ENCODE measurements at regions of chr17 and their contacts with region 1.

Region 1: DNA sequence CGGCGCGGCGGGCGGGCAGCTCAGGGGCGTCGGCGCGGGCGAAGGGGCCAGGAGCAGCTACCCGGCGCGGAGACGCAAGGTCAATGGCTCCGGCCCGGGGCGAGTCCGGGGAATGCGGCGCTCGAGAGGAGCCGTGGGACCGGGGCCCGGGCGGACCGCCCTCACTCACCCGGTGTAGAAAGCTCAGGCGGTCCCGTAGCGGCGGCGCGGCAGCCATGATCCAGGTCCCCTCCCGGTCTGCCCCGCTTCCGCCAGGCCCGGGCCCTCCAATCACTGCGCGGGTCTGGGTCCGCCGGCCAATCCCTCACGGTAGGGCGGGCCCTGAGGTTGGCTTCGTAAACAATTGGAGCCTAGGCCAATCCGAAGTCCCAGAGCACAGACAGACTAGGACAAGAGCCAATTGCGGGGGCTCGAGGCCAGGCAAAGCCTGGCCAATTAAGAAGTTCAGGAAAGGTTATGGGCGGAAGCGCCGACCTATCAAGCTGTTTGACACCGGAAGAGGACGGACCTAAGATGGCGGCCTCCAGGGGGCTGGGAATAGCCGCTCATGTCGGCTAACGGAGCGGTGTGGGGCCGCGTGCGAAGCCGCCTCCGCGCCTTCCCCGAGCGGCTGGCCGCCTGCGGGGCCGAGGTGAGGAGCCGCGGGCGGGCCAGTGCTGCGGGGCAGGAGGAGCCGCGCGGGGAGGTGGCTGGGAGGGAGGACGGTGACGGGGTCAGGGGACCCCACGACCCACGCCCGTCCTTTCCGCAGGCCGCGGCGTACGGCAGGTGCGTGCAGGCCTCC is at the starts of genes NDUFAF8 and TEPSIN:
- DNase-seq: peak; percentile 100
- H3K4me3 ChIP-seq: peak within 1 kb of the TSS; percentile 79
- H3K27ac ChIP-seq: peak within 1 kb of the TSS; percentile 61
- H3K4me1 ChIP-seq: peaks cover 35% of the 10 kb centered on the region
- CTCF ChIP-seq: no peak
- total RNA-seq, gene NDUFAF8: 129 and 161 TPM in 2 replicates
- total RNA-seq, gene TEPSIN: 29.7 and 46.4 TPM in 2 replicates

Region 2: DNA sequence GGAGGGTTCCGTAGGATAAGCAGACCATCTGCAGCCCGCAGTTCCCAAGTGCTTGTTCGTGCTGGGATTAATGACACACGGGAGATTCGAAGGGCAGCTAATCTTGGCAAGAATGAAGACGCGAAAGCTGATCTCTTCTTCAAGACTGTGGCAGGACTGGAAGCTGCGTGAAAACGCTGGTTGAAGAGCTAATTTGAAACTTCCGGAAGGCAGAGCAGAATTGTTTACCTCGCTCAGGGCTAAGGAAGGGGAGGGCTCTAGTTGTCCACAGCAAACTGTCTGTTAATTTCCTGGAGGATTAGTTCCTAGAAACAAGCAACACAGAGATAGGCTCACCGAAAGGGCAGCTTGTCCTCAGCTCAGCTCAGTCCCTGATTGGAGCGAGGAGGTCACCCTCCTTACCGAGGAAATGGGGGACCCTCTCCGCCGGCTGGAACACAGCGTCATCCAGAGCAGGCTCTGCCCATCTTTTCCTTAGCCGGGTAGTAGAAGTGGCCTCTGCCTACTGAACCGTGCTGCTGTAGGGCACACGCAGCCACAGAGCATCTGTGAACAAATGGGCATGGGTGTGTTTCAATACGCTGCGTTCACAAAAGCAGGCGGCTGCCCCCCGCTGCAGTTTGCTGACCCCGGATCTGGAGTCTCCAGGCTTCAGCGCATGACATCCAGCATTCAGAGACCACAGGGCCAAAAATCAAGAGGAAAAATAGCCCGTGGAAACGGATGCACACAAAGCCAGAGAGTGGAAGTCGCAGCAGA is 220.8 kb before region 1 on chr17:
- CTCF ChIA-PET with region 1: no interaction called
- POLR2A ChIA-PET with region 1: no interaction called
- intact Hi-C with region 1: loop called (anchors 2 kb)
- DNase-seq: no peak
- H3K4me3 ChIP-seq: no peak overlapping the region
- H3K27ac ChIP-seq: no peak overlapping the region
- H3K4me1 ChIP-seq: no peaks in the 10 kb centered on the region
- CTCF ChIP-seq: no peak

Region 3: GRCh38 chr17:81040791-81041337 is 198.1 kb before region 1 on chr17:
- CTCF ChIA-PET with region 1: no interaction called
- POLR2A ChIA-PET with region 1: no interaction called
- intact Hi-C with region 1: no loop called
- DNase-seq: peak; percentile 52
- H3K4me3 ChIP-seq: no peak overlapping the region
- H3K27ac ChIP-seq: no peak overlapping the region
- H3K4me1 ChIP-seq: no peaks in the 10 kb centered on the region
- CTCF ChIP-seq: peak; percentile 81

Region 4: DNA sequence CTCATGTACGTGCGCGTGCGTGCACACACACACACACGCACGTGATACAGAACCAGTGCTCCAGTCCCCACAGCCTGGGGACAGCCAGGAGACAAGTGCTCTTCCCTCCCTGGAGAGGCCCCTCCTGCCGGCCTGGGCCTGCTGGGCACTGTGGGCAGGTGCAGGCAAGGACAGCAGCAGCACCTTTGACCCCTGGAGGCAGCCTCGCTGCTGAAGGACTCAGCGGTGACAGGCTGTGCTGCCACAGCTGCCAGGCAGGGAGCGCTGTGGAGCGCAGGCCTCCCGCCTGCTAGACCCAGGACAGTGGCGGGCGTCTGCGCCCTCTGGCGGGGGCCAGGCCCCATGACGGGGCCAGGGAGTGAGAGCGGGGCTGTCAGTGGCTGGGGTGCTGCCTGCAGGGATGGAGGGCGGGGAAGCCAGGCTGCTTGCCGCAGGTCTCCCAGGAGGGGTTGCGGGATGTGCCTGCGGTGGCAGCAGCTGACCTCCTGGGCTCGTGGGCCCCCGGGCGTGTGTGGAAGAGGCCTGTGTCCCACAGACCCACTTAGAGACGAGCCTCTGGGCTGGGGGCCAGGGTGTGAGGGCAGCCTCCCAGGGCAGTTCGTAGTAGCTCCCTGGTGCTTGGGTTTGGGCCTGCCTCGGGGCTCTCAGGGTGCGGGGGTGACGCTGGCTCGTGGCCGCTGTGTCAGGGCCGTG is 137.2 kb before region 1 on chr17:
- CTCF ChIA-PET with region 1: no interaction called
- POLR2A ChIA-PET with region 1: no interaction called
- intact Hi-C with region 1: loop called (anchors 1 kb)
- DNase-seq: peak; percentile 93
- H3K4me3 ChIP-seq: no peak overlapping the region
- H3K27ac ChIP-seq: no peak overlapping the region
- H3K4me1 ChIP-seq: peaks cover 4% of the 10 kb centered on the region
- CTCF ChIP-seq: peak; percentile 100

Region 5: GRCh38 chr17:81142301-81143199 is 96.5 kb before region 1 on chr17:
- CTCF ChIA-PET with region 1: interaction called, 7 read pairs
- POLR2A ChIA-PET with region 1: no interaction called
- intact Hi-C with region 1: loop called (anchors 1 kb)
- DNase-seq: peak; percentile 81
- H3K4me3 ChIP-seq: no peak overlapping the region
- H3K27ac ChIP-seq: no peak overlapping the region
- H3K4me1 ChIP-seq: no peaks in the 10 kb centered on the region
- CTCF ChIP-seq: peak; percentile 83

Region 6: DNA sequence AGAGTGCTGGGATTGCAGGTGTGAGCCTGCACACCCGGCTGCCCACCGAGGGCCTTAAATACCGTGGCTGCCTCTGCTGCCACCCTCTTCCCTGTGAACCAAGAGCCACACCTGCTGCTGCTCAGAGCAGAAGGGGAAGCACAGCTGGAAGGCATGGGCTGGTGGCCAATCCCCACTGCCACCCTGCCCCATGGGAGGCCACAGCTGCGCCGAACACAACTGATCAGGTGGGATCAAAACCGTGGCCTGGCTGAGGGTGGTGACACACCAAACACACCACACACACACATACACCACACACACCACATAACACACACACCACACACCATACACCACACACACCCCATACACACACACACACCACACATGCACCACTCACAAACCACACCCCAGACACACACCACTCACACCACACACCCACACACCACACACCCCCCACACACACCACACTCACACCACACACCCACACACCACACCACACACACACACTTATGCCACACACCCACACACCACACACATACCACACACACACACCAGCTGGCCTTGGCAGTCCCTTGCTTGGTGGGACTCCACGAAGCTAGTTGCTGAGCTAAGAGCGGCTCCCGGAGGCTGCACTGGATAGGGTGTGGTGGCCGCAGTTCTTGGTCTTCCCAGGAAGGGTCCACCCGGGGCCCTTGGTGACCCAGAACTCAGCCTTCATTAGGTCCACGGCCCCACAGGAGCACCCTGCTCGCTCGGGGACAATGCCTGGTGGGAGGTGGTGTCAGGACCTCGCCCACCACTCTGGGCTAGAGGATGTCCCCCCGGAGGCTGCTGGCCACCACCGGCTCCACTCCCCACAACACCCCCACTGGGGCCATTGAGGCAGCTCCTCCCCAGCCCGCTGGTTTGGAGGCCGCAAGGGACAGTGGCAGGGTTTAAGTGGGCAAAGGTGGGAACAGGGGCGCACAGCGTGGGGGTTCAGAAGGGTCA is 31.1 kb before region 1 on chr17:
- CTCF ChIA-PET with region 1: no interaction called
- POLR2A ChIA-PET with region 1: no interaction called
- intact Hi-C with region 1: loop called (anchors 1 kb)
- DNase-seq: peak; percentile 94
- H3K4me3 ChIP-seq: no peak overlapping the region
- H3K27ac ChIP-seq: peak overlapping the region; percentile 56
- H3K4me1 ChIP-seq: peaks cover 12% of the 10 kb centered on the region
- CTCF ChIP-seq: no peak

Region 7: DNA sequence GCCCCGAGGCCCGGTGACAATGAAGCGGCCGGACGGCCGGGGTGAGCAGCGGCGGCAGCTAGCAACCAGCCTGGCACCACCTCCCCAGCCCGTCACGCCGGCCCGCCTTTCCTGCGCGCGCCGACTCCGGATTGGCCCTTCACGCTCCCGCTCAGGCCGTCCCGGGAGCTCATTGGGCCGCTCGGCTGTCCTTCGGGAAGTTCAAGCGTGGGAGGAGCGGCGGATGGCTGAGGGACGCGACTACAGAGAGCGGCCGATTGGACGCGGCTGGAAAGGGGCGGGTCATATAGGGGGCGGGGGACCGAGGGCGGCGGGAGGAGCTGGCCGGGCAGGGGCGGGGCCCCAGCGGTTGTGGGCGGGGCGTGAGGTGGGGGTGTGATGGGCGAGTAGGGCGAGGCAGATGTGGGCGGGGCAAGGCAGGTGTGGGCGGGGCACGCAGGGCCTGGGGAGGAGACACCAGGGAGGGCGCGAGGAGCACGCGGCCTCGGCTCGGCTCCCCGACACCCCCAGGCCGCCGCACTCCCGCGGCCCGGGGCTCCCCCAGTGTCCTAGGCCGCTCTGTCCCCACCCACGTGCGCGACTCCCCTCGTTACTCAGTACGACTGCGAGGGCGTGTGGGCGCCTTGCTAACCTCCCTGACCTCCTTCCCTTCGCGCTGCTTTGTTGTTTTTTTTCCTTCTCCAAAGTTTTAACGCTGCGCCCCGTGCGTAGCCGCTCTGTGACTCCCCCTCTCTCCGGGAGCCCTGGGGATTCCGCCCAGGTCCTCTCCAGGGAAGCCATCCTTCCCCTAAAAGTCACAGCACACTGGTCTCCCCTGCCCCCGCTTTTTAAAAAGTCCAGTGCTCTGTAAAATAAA is 15.9 kb before region 1 on chr17 and contains the start of gene CEP131:
- CTCF ChIA-PET with region 1: no interaction called
- POLR2A ChIA-PET with region 1: interaction called, 12 read pairs
- intact Hi-C with region 1: loop called (anchors 1 kb)
- DNase-seq: peak; percentile 100
- H3K4me3 ChIP-seq: peak within 1 kb of the TSS; percentile 79
- H3K27ac ChIP-seq: no peak within 1 kb of the TSS
- H3K4me1 ChIP-seq: peaks cover 30% of the 10 kb centered on the region
- CTCF ChIP-seq: no peak
- total RNA-seq, gene CEP131: 32.9 and 35.0 TPM in 2 replicates

Measured in OCI-LY7 (cell line).